SK-N-SH (cell line): ENCODE measurements at regions of chr19 and their contacts with region 1.

Region 1: GRCh38 chr19:41570639-41571112 is 5.3 kb upstream of the CEACAM21 start:
- DNase-seq: peak; percentile 79
- H3K4me3 ChIP-seq: peak overlapping the region in 1 of 2 experiments; percentile 37; a peak in 1 of 4 replicates
- H3K27ac ChIP-seq: no peak overlapping the region
- H3K4me1 ChIP-seq: no peaks in the 10 kb centered on the region
- H3K27me3 ChIP-seq: peaks cover 36% of the 10 kb centered on the region
- CTCF ChIP-seq: peak; percentile 90
- EP300 ChIP-seq: no peak
- RAD21 ChIP-seq: peak; percentile 79

Region 2: GRCh38 chr19:41449079-41449864 is 121.4 kb before region 1 on chr19:
- CTCF ChIA-PET with region 1: interaction called, 184 read pairs
- POLR2A ChIA-PET with region 1: no interaction called
- DNase-seq: peak; percentile 89
- H3K4me3 ChIP-seq: peak overlapping the region in 1 of 2 experiments; percentile 46; a peak in 1 of 4 replicates
- H3K27ac ChIP-seq: no peak overlapping the region
- H3K4me1 ChIP-seq: no peaks in the 10 kb centered on the region
- H3K27me3 ChIP-seq: peaks cover 80% of the 10 kb centered on the region
- CTCF ChIP-seq: peak; percentile 98
- EP300 ChIP-seq: no peak
- RAD21 ChIP-seq: peak; percentile 79

Region 3: DNA sequence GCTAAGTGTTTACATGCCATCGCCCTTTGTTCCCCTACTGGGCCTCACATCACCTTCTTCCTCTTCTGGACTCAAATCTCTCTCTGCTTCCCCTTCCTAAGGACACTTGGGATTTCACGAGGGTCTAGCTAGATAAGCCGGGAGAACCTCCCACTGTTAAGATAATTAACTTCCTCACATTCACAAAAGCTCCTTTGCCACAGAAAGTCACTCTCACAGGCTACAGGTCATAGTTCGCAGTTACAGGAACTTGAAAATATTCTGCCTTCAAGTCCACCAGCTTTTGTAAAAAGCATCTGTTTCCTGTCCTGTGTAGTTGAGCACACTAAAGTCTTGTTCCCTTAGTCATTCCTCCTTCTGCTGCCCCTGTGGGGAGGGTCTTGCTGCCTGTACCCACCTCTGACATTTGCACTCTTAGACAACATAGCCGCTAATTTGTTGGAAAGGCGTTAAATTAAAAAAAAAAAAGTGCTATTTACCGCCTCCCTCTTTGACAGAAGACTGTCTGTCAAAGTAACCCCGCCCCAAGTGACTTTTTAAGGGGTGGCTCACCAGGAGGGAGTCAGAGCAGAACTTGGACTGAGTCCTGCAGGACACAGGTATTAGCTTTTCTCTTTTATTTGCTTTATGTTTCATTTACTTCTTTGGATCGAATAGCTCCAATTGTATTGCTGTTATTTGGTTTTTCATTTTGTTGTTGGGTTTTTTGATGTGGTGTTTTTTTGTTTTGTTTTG is 21.6 kb before region 1 on chr19:
- CTCF ChIA-PET with region 1: interaction called, 10 read pairs
- POLR2A ChIA-PET with region 1: no interaction called
- DNase-seq: no peak
- H3K4me3 ChIP-seq: no peak overlapping the region
- H3K27ac ChIP-seq: no peak overlapping the region
- H3K4me1 ChIP-seq: no peaks in the 10 kb centered on the region
- H3K27me3 ChIP-seq: peaks cover 80% of the 10 kb centered on the region
- CTCF ChIP-seq: no peak
- EP300 ChIP-seq: no peak
- RAD21 ChIP-seq: no peak

Region 4: DNA sequence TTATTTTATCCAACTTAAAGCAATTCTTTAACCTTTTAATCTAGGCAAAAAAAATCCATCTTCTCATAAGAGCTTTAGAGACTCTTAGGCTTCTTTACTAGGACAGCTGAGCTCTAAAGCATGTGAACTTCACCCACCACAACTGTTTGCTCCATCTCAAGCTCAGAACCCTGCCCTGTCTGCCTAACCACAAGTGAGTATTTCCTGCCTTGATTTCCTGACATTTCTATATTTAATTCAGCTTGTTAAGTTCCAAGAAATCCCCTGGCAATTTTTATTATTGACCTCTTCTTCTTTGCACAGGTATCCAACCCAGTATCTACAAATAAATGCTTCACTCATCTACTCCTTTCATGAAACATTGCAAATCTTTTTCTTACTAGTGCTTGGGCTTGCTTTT is 15.8 kb before region 1 on chr19:
- CTCF ChIA-PET with region 1: interaction called, 42 read pairs
- POLR2A ChIA-PET with region 1: no interaction called
- DNase-seq: no peak
- H3K4me3 ChIP-seq: no peak overlapping the region
- H3K27ac ChIP-seq: no peak overlapping the region
- H3K4me1 ChIP-seq: no peaks in the 10 kb centered on the region
- H3K27me3 ChIP-seq: peaks cover 57% of the 10 kb centered on the region
- CTCF ChIP-seq: no peak
- EP300 ChIP-seq: no peak
- RAD21 ChIP-seq: no peak

Region 5: GRCh38 chr19:41597600-41598041 is 26.9 kb after region 1 on chr19:
- CTCF ChIA-PET with region 1: interaction called, 25 read pairs
- POLR2A ChIA-PET with region 1: no interaction called
- DNase-seq: peak; percentile 79
- H3K4me3 ChIP-seq: no peak overlapping the region
- H3K27ac ChIP-seq: no peak overlapping the region
- H3K4me1 ChIP-seq: no peaks in the 10 kb centered on the region
- H3K27me3 ChIP-seq: peaks cover 3% of the 10 kb centered on the region; the same call in 1 of the 2 replicates
- CTCF ChIP-seq: peak; percentile 95
- EP300 ChIP-seq: no peak
- RAD21 ChIP-seq: peak; percentile 36

Region 6: GRCh38 chr19:41606215-41606837 is 35.6 kb after region 1 on chr19:
- CTCF ChIA-PET with region 1: interaction called, 10 read pairs
- POLR2A ChIA-PET with region 1: no interaction called
- DNase-seq: no peak
- H3K4me3 ChIP-seq: no peak overlapping the region
- H3K27ac ChIP-seq: no peak overlapping the region
- H3K4me1 ChIP-seq: no peaks in the 10 kb centered on the region
- H3K27me3 ChIP-seq: peaks cover 20% of the 10 kb centered on the region; the same call in 1 of the 2 replicates
- CTCF ChIP-seq: no peak
- EP300 ChIP-seq: no peak
- RAD21 ChIP-seq: no peak